ENCODE measurements at regions of chr1 and their contacts with region 1.

Region 1: GRCh38 chr1:209590405-209590804 is 6.9 kb downstream of the CAMK1G start:
- DNase-seq: no peak
- ATAC-seq: peak; percentile 62

Region 2: GRCh38 chr1:209692745-209693504 is 102.5 kb after region 1 on chr1:
- intact Hi-C with region 1: loop called (anchors 5 kb)
- DNase-seq: peak; percentile 92
- ATAC-seq: peak; percentile 81

Measured in sciatic nerve (tissue), 2 donors.